ENCODE measurements at regions of chr12 and their contacts with region 1.

Region 1: GRCh38 chr12:3646561-3647241 is 106.2 kb downstream of the CRACR2A start:
- DNase-seq: no peak
- H3K4me3 Mint-ChIP-seq: peak overlapping the region; percentile 40
- H3K27ac Mint-ChIP-seq: peak overlapping the region; percentile 70
- H3K4me1 Mint-ChIP-seq: peaks cover 49% of the 10 kb centered on the region
- H3K27me3 Mint-ChIP-seq: no peaks in the 10 kb centered on the region

Region 2: DNA sequence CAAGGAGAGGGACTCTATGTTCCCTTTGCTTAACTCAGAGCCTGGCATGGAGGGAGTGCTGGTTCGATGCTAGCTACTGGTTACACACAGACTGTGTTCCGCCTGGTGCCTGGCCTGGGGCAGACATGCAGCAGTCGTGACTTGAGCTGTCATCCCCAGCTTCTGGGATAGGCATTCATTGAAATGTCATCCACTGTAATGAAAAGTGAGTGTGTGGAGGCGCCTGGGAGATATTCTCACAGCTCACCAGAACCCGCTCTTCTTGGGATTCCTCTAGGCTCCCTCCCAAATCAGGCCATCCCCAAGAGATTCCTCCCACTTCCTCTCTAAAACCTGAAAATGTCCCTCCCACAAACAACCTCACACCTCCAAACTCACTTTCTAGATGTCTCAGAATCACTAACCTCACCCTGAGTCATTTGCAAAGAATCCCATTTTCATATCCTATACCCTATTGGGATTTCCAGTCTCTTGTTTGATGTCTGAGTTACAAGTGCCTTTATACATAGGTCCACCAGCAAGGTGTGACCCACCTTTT is 23.5 kb after region 1 on chr12:
- intact Hi-C with region 1: loop called (anchors 1 kb)
- DNase-seq: no peak
- H3K4me3 Mint-ChIP-seq: peak overlapping the region; percentile 32
- H3K27ac Mint-ChIP-seq: peak overlapping the region; percentile 68
- H3K4me1 Mint-ChIP-seq: peaks cover 24% of the 10 kb centered on the region
- H3K27me3 Mint-ChIP-seq: no peaks in the 10 kb centered on the region

Measured in activated T-helper 1 cell treated with anti-CD3 and anti-CD28 coated beads, Interleukin-12 subunit alpha, Interleukin-12 subunit beta, Interleukin-2, Interleukin-4 antibody, amounts not matched to agents 30 ng/mL and 10 ng/mL and 1 ng/mL, durations not matched to agents 14 hours and 24 hours and 36 hours (primary cell).